Activated CD4-positive, alpha-beta memory T cell treated with anti-CD3 and anti-CD28 coated beads, Interleukin-2, amount 10 ng/mL, durations not matched to agents 7 days and 5 days (primary cell): ENCODE measurements at regions of chr1 and their contacts with region 1.

Region 1: DNA sequence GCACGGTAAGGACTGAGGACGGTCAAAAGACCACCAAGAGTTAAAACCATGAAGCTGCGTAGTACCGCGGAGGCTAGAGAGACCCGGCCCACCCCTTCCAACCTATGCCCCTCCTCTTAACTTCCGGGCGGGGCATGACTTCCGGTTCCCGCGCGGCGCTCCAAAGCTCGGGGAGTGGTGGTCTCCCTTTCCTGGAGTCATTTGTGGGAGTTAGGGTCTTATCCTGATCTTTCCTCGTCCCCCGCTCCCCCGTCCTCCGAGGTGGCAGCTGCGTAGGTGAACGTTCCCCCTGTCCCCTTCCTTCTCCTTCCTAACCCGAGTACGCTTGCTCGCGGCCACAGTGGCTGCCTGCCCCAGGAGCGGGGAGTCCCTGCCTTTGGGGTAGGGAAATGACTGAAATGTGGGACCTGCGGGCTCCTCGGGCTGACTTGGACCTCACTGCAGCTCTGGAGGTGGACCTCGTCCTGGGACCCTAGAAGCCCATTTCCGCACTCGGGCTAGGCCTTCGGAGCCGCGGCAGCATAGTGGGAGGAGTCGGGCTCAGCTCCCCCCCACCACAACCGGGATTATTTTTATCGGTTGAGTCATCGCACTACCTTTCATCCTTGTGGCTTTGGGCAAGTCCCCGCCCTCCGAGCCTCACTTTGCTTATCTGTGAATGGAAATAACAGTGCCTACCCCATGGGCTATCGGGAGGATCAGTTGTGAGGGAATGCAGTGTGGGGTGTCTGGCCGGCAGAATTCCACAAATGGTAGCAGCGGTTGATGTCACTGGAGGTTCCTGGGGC is 24.1 kb downstream of the CELA3A start:
- DNase-seq: peak; percentile 90
- H3K4me3 Mint-ChIP-seq: peak overlapping the region; percentile 86
- H3K27ac Mint-ChIP-seq: peak overlapping the region; percentile 93
- H3K4me1 Mint-ChIP-seq: peaks cover 55% of the 10 kb centered on the region
- H3K27me3 Mint-ChIP-seq: no peaks in the 10 kb centered on the region

Region 2: DNA sequence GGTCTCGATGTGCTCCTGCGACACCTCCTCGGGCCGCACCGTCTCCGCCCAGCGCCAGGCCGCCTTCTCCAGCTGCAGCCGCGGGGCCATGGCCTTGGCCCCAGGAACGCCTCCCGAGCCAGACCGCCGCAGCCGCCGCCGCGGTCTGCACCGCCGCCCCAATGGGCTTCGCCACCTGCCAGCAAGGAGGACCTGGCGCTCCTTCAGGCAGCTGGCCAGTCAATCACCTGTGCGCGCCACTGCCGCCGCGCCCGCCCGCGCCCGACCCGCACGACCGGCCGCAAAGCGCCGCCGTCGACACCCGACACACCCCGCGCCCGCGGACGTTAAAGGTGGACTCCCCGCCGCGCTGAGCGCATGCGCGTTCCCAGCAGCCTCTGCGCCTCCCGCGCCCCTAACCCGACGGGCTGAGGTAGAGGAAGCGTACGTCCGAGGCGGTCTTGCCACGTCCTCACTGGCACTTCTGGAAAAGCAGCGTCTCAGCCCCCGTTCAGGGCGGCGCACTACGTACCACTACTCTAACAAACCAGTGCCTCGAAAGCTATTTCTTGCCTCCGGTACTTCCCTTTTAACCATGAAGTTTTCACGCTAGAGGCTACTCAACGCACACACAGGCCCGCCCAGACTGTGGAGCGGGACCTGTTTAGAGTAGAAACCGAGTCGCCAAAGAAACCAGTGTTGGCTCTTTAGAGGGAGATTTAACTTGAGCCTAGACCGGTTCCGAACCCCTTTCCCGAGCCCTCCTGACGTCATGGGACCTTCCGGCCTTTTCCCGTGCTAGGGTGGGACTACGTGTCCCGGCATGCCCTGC is 242.5 kb before region 1 on chr1 and contains the start of gene USP48:
- CTCF ChIA-PET with region 1: interaction called, 4 read pairs
- POLR2A ChIA-PET with region 1: interaction called, 35 read pairs
- DNase-seq: peak; percentile 98
- H3K4me3 Mint-ChIP-seq: peak within 1 kb of the TSS; percentile 87
- H3K27ac Mint-ChIP-seq: peak within 1 kb of the TSS; percentile 100
- H3K4me1 Mint-ChIP-seq: peaks cover 30% of the 10 kb centered on the region
- H3K27me3 Mint-ChIP-seq: peaks cover 5% of the 10 kb centered on the region
- total RNA-seq, gene USP48: 80.1 to 81.8 TPM

Region 3: DNA sequence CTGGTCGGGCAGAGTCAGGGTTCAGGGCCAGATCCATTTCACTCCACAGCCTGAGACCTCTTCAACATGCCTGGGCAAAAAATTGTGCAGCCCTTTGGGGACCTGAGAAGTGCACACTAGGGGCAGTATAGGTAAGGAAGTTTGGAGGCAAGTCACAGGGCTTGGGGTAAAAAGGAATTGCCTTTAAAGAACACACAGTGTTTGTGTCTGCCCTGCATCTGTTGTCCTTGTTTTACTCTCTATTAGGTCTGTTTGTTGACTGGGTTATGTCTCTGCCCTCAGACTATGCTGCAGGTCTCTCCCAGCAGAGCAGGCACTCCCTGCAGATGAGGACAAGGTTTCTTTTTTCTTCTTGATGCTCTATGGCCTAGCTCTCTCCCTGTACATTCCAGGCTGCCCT is 191.5 kb before region 1 on chr1:
- CTCF ChIA-PET with region 1: no interaction called
- POLR2A ChIA-PET with region 1: no interaction called
- DNase-seq: no peak
- H3K4me3 Mint-ChIP-seq: no peak overlapping the region
- H3K27ac Mint-ChIP-seq: no peak overlapping the region
- H3K4me1 Mint-ChIP-seq: no peaks in the 10 kb centered on the region
- H3K27me3 Mint-ChIP-seq: no peaks in the 10 kb centered on the region

Region 4: GRCh38 chr1:22039594-22040285 is 14.2 kb after region 1 on chr1:
- CTCF ChIA-PET with region 1: interaction called, 88 read pairs
- POLR2A ChIA-PET with region 1: interaction called, 1,616 read pairs
- DNase-seq: peak; percentile 95
- H3K4me3 Mint-ChIP-seq: peak overlapping the region; percentile 74
- H3K27ac Mint-ChIP-seq: peak overlapping the region; percentile 99
- H3K4me1 Mint-ChIP-seq: peaks cover 50% of the 10 kb centered on the region
- H3K27me3 Mint-ChIP-seq: no peaks in the 10 kb centered on the region

Region 5: GRCh38 chr1:22077728-22078127 is 52.2 kb after region 1 on chr1:
- CTCF ChIA-PET with region 1: interaction called, 5 read pairs
- POLR2A ChIA-PET with region 1: interaction called, 1,616 read pairs
- DNase-seq: no peak
- H3K4me3 Mint-ChIP-seq: no peak overlapping the region
- H3K27ac Mint-ChIP-seq: no peak overlapping the region
- H3K4me1 Mint-ChIP-seq: peaks cover 76% of the 10 kb centered on the region
- H3K27me3 Mint-ChIP-seq: no peaks in the 10 kb centered on the region

Region 6: GRCh38 chr1:22089787-22090186 is 64.2 kb after region 1 on chr1:
- CTCF ChIA-PET with region 1: interaction called, 6 read pairs
- POLR2A ChIA-PET with region 1: interaction called, 28 read pairs
- DNase-seq: no peak
- H3K4me3 Mint-ChIP-seq: peak overlapping the region; percentile 63
- H3K27ac Mint-ChIP-seq: peak overlapping the region; percentile 79
- H3K4me1 Mint-ChIP-seq: peaks cover 87% of the 10 kb centered on the region
- H3K27me3 Mint-ChIP-seq: no peaks in the 10 kb centered on the region

Region 7: DNA sequence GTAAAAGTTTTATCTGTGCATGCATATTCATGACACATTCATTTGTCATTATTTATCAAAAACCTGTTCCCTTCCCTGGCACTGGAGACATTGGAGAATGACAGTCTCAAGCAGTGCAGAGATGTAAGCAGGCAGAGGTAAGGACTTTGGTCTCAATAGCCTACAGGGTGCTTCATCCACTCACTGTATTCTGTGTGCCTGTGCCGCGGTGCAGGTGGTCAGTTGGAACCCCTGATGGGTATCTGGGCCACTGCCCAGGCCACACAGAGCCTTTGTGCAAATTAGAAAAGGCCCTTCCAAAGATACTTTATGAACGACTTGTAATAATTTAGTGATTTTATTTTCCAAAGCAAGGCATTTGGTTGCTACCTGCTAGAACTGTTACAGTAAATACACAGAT is 70.9 kb after region 1 on chr1:
- CTCF ChIA-PET with region 1: interaction called, 6 read pairs
- POLR2A ChIA-PET with region 1: interaction called, 28 read pairs
- DNase-seq: no peak
- H3K4me3 Mint-ChIP-seq: no peak overlapping the region
- H3K27ac Mint-ChIP-seq: no peak overlapping the region
- H3K4me1 Mint-ChIP-seq: peaks cover 65% of the 10 kb centered on the region
- H3K27me3 Mint-ChIP-seq: no peaks in the 10 kb centered on the region

Region 8: GRCh38 chr1:22105611-22106207 is 80.1 kb after region 1 on chr1:
- CTCF ChIA-PET with region 1: interaction called, 6 read pairs
- POLR2A ChIA-PET with region 1: interaction called, 29 read pairs
- DNase-seq: no peak
- H3K4me3 Mint-ChIP-seq: no peak overlapping the region
- H3K27ac Mint-ChIP-seq: peak overlapping the region; percentile 85
- H3K4me1 Mint-ChIP-seq: peaks cover 56% of the 10 kb centered on the region
- H3K27me3 Mint-ChIP-seq: no peaks in the 10 kb centered on the region